CD4-positive, alpha-beta memory T cell (primary cell): ENCODE measurements at regions of chr14 and their contacts with region 1.

Region 1: DNA sequence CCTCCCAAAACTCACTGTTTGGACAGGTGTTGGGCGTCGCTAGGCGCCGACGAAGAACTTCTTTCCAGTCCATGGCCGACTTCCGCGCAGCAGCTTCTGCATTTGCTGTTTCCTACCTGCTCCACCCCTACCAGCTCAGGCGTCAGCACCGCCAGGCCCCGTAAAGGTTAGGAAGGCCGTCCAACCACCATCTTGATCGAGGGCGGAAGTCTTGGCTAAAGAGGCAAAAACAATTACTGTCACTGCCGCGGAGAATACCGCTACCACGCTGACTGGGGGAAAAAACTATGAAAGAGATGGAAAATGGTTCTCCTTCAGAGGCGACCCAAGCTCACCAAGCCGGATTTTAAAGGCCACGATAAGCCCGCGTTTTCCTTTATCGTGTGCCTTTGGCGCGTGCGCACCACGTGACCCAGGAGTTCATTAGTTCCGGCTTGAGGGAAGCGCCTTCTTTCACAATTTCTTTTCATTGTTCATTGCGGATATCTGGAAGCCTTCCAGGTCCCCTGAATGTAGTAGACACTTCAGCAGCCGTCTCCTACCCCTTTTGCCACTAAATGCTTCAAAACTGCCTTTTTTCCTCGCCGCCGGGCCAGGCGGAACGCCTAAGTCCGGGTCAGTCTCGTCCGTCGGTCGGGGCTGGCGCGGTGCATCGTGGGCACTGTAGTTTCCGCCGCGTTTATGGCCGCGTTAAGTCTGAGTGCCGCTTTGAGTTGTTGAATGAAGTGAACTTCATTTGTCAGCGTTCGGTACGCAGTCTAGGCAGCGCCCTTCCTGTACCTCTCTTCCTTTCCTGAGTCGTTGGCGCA is at the starts of genes PPP2R3C and PRORP:
- DNase-seq: peak; percentile 93 to 97 (median 95)
- H3K4me3 ChIP-seq: peak within 1 kb of the TSS; percentile 94 to 99
- H3K4me3 Mint-ChIP-seq: peak within 1 kb of the TSS; percentile 97 to 100 (median 98)
- H3K27ac ChIP-seq: peak within 1 kb of the TSS; percentile 99
- H3K27ac Mint-ChIP-seq: peak within 1 kb of the TSS; percentile 99 to 100 (median 100)
- H3K4me1 ChIP-seq: peaks cover 72% of the 10 kb centered on the region
- H3K4me1 Mint-ChIP-seq: peaks cover 42 to 86% (median 64%) of the 10 kb centered on the region in 4 donors
- H3K27me3 ChIP-seq: no peaks in the 10 kb centered on the region
- H3K27me3 Mint-ChIP-seq: no peaks in the 10 kb centered on the region
- total RNA-seq, gene PPP2R3C: 36.1 to 41.0 TPM
- total RNA-seq, gene PRORP: 38.9 to 39.4 TPM

Region 2: DNA sequence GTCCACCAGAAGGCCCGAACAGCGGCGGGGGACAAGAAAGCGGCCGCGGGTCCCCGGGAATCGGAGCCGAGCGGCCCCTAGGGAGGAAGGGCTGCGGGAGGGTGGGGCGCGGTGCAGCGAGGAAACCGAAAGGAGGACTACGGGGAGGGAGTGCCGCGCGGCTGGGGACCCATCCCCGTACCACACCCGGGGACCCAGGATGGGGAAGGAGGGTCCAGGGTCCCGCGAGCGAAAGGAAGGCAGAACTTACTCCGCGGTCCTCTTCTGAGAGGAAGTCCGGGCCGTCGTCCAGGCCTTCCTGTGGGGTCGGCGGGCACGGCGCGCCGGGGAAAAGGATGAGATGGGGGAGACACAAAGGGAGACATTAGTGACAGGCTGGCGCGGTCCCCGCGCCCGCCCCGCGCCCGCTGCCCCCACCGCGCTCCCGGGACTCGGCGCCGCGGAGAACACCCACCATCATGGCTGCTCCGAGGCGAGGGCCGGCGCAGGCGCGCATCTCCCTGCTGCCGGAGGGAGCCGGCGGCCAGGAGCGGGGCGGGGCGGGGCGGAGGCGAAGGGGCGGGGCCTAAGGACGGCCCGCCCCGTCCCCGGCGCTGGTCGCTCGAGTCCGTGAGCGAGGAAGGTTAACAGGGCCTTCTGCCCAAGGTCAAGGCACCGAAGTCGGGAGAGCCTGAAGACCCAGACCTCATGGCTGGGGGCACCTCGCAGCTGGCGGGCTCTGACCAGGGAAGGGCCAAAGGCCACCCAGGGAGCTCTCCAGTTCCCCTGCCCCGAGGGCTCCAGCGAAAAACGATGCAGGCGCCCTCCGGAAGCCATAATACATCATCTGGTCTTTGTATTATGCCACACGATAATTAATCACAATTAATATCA is 492.2 kb before region 1 on chr14 and contains the start of gene SNX6:
- CTCF ChIA-PET with region 1: no interaction called
- POLR2A ChIA-PET with region 1: interaction called, 4 read pairs
- intact Hi-C with region 1: loop called (anchors 2 kb)
- DNase-seq: peak; percentile 83 to 86 (median 84)
- H3K4me3 ChIP-seq: peak within 1 kb of the TSS; percentile 83 to 88
- H3K4me3 Mint-ChIP-seq: peak within 1 kb of the TSS; percentile 87 to 99 (median 96)
- H3K27ac ChIP-seq: peak within 1 kb of the TSS; percentile 97
- H3K27ac Mint-ChIP-seq: peak within 1 kb of the TSS; percentile 91 to 98 (median 95)
- H3K4me1 ChIP-seq: peaks cover 46% of the 10 kb centered on the region
- H3K4me1 Mint-ChIP-seq: peaks cover 13 to 42% (median 29%) of the 10 kb centered on the region in 4 donors
- H3K27me3 ChIP-seq: no peaks in the 10 kb centered on the region
- H3K27me3 Mint-ChIP-seq: peaks cover 0 to 2% of the 10 kb centered on the region in 2 donors
- total RNA-seq, gene SNX6: 81.0 to 82.6 TPM

Region 3: GRCh38 chr14:34982417-34983147 is 139.5 kb before region 1 on chr14 and contains the start of gene SRP54:
- CTCF ChIA-PET with region 1: interaction called, 7 read pairs
- POLR2A ChIA-PET with region 1: interaction called, 53 read pairs
- intact Hi-C with region 1: loop called (anchors 1 kb)
- DNase-seq: peak; percentile 99 to 100 (median 100)
- H3K4me3 ChIP-seq: peak within 1 kb of the TSS; percentile 87 to 91
- H3K4me3 Mint-ChIP-seq: no peak within 1 kb of the TSS
- H3K27ac ChIP-seq: peak within 1 kb of the TSS; percentile 98
- H3K27ac Mint-ChIP-seq: no peak within 1 kb of the TSS
- H3K4me1 ChIP-seq: peaks cover 47% of the 10 kb centered on the region
- H3K4me1 Mint-ChIP-seq: peaks cover 11 to 23% (median 18%) of the 10 kb centered on the region in 4 donors
- H3K27me3 ChIP-seq: no peaks in the 10 kb centered on the region
- H3K27me3 Mint-ChIP-seq: no peaks in the 10 kb centered on the region
- total RNA-seq, gene SRP54: 59.8 to 62.7 TPM

Region 4: GRCh38 chr14:35079742-35080141 is 42.3 kb before region 1 on chr14:
- CTCF ChIA-PET with region 1: no interaction called
- POLR2A ChIA-PET with region 1: no interaction called
- intact Hi-C with region 1: no loop called
- DNase-seq: no peak
- H3K4me3 ChIP-seq: no peak overlapping the region
- H3K4me3 Mint-ChIP-seq: no peak overlapping the region
- H3K27ac ChIP-seq: no peak overlapping the region
- H3K27ac Mint-ChIP-seq: peak overlapping the region in 2 of 7 donors; percentile 29 to 50
- H3K4me1 ChIP-seq: no peaks in the 10 kb centered on the region
- H3K4me1 Mint-ChIP-seq: no peaks in the 10 kb centered on the region
- H3K27me3 ChIP-seq: no peaks in the 10 kb centered on the region
- H3K27me3 Mint-ChIP-seq: no peaks in the 10 kb centered on the region

Region 5: GRCh38 chr14:35140718-35141581 is 18.9 kb after region 1 on chr14:
- CTCF ChIA-PET with region 1: interaction called, 11 read pairs
- POLR2A ChIA-PET with region 1: interaction called, 6 read pairs
- intact Hi-C with region 1: no loop called
- DNase-seq: peak in 4 of 5 donors; percentile 38 to 61 (median 53)
- H3K4me3 ChIP-seq: no peak overlapping the region
- H3K4me3 Mint-ChIP-seq: no peak overlapping the region
- H3K27ac ChIP-seq: no peak overlapping the region
- H3K27ac Mint-ChIP-seq: peak overlapping the region; percentile 14 to 92 (median 84)
- H3K4me1 ChIP-seq: peaks cover 10% of the 10 kb centered on the region
- H3K4me1 Mint-ChIP-seq: peaks cover 15 to 23% (median 19%) of the 10 kb centered on the region in 4 donors
- H3K27me3 ChIP-seq: no peaks in the 10 kb centered on the region
- H3K27me3 Mint-ChIP-seq: no peaks in the 10 kb centered on the region

Region 6: DNA sequence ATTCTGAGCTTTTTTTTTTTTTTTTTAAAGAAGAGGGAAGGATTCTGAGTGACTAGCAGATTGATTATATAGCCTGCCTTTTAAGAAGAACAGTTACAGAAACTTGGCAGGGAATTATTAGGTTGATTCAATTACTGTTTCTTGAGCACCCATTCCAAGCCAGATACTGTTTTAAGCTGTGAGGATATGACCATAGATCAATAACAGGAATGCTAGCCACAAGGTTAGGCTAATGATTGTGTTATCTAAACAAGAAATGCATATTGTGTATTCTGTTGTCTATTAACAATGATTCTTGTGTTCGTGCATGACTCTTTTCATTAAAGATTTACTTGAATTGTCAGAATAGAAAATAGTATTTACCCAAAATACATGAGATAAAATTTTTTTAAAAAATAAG is 67.3 kb after region 1 on chr14:
- CTCF ChIA-PET with region 1: no interaction called
- POLR2A ChIA-PET with region 1: no interaction called
- intact Hi-C with region 1: no loop called
- DNase-seq: no peak
- H3K4me3 ChIP-seq: no peak overlapping the region
- H3K4me3 Mint-ChIP-seq: no peak overlapping the region
- H3K27ac ChIP-seq: no peak overlapping the region
- H3K27ac Mint-ChIP-seq: no peak overlapping the region
- H3K4me1 ChIP-seq: no peaks in the 10 kb centered on the region
- H3K4me1 Mint-ChIP-seq: peaks cover 0 to 9% (median 1%) of the 10 kb centered on the region in 4 donors
- H3K27me3 ChIP-seq: no peaks in the 10 kb centered on the region
- H3K27me3 Mint-ChIP-seq: no peaks in the 10 kb centered on the region

Region 7: DNA sequence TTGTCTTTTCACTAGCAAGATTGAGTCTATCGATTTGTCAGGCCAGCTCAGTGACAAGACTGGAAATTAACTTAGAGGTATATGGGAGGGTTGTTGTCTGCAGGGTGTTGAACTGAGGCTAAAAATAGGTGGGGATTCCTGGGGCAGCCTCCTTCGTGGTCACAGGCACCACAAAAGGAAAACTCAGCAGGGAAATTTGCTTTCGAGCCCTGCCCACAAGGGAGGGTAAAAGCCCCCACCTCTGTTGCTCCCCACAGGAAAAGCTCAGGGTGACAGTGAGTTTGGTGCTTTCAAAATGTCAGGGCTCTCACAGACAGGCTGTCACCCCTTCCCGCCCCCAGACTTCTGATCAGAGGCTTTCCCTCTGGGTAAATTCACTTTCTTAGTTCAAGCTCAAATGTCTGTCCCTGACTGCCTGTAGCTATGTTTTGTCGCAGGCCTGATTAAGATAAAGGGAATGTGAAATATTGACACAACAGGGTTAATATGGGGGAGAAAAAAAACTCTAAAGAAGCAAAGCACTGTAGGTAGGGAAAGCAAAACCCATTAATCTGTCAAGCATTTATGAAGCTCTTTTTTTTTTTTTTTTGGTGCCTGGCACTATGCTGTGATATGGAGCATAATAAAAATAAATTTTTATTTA is 294.1 kb after region 1 on chr14:
- CTCF ChIA-PET with region 1: interaction called, 22 read pairs
- POLR2A ChIA-PET with region 1: interaction called, 26 read pairs
- intact Hi-C with region 1: no loop called
- DNase-seq: peak; percentile 32 to 91 (median 54)
- H3K4me3 ChIP-seq: no peak overlapping the region
- H3K4me3 Mint-ChIP-seq: peak overlapping the region; percentile 8 to 84 (median 68)
- H3K27ac ChIP-seq: peak overlapping the region; percentile 72
- H3K27ac Mint-ChIP-seq: peak overlapping the region; percentile 86 to 96 (median 92)
- H3K4me1 ChIP-seq: peaks cover 40% of the 10 kb centered on the region
- H3K4me1 Mint-ChIP-seq: peaks cover 36 to 49% (median 41%) of the 10 kb centered on the region in 4 donors
- H3K27me3 ChIP-seq: no peaks in the 10 kb centered on the region
- H3K27me3 Mint-ChIP-seq: no peaks in the 10 kb centered on the region